ENCODE measurements at regions of chr1 and their contacts with region 1.

Region 1: DNA sequence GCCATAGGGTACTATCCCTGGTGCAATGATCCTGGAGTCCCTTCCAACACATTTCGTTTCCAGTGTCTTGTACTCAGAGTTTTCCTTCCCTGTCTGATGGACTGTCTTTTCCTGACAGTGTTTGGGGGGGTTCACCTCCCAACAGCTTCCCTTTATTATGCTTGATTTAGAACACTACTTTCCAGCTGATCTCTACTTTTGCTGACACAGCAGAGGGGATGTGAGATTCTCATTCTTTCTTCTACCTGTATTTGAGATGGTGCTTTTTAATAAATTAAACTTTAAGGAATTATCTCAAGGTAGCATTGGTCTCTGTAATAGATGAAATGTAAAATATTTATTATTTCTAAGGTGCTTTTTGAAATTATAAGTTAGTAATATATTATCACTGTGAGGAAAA is 41.0 kb downstream of the SLC35A3 start:
- DNase-seq: no peak
- ATAC-seq: no peak
- H3K4me3 ChIP-seq: no peak overlapping the region
- H3K27ac ChIP-seq: no peak overlapping the region
- H3K4me1 ChIP-seq: no peaks in the 10 kb centered on the region
- H3K27me3 ChIP-seq: no peaks in the 10 kb centered on the region
- CTCF ChIP-seq: no peak
- EP300 ChIP-seq: no peak
- POLR2A ChIP-seq: no peak
- RAD21 ChIP-seq: no peak

Region 2: GRCh38 chr1:100760511-100760910 is 749.7 kb after region 1 on chr1:
- CTCF ChIA-PET with region 1: no interaction called
- POLR2A ChIA-PET with region 1: no interaction called
- in situ Hi-C with region 1: no loop called
- intact Hi-C with region 1: loop called (anchors 5 kb)
- DNase-seq: no peak
- ATAC-seq: no peak
- H3K4me3 ChIP-seq: no peak overlapping the region
- H3K27ac ChIP-seq: no peak overlapping the region
- H3K4me1 ChIP-seq: no peaks in the 10 kb centered on the region
- H3K27me3 ChIP-seq: no peaks in the 10 kb centered on the region
- CTCF ChIP-seq: no peak
- EP300 ChIP-seq: no peak
- POLR2A ChIP-seq: no peak
- RAD21 ChIP-seq: no peak